Heart left ventricle (tissue), 16 donors: ENCODE measurements at regions of chr18 and their contacts with region 1.

Region 1: DNA sequence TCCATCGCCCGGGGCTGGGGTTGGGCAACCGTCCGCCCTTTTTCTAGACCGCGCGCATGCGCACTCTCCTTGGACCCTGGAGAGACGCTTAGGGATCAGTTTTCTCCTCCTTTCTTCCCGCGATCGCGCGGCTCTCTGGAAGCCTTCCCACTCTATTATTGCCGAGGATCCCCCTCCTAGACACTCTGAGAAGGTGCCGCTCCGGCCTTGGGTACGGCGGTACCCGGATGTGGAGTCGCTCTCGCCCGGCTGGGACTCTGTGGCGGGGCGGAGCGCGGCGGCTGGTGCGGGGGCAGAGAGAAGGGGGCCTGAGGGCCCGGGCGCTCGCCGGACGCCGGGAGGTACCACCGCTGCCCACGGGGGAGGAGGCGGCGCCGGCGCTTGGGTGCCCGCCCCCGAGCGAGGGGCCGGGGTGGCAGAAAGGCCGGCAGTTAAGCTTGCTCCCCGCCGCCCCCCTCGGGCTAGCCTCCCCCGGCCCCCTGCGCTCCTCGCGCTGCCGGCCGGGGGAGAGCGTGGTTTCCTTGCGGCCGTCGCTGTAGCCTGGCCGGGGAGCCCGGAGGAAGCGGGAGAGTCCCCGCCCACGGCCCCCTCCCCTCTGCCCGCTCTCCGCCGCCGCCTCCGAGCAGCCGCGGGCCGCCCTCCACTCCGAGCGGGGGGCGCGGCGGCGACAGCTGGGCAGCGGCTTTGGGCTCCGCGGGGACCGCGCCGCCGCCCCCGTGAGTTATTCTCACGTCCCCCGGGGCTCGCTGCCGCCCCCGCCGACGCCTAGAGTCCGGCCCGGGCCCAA is at the start of gene MIB1:
- DNase-seq: peak; percentile 67 to 100 (median 73)
- ATAC-seq: peak; percentile 76 to 88 (median 86)
- H3K4me3 ChIP-seq: peak within 1 kb of the TSS; percentile 71 to 96 (median 89)
- H3K27ac ChIP-seq: peak within 1 kb of the TSS; percentile 96 to 99 (median 98)
- H3K4me1 ChIP-seq: peaks cover 0 to 38% (median 18%) of the 10 kb centered on the region in 12 donors
- H3K27me3 ChIP-seq: no peaks in the 10 kb centered on the region
- CTCF ChIP-seq: no peak
- POLR2A ChIP-seq: peak in 1 of 2 donors; percentile 74
- total RNA-seq, gene MIB1: 15.3 to 33.4 (median 24.0) TPM

Region 2: GRCh38 chr18:21704603-21705364 is 36.1 kb before region 1 on chr18 and contains the start of gene ABHD3:
- intact Hi-C with region 1: loop called in 6 of 10 experiments (anchors 1 to 5 kb)
- DNase-seq: peak; percentile 94 to 97 (median 95)
- ATAC-seq: peak; percentile 99 to 100 (median 100)
- H3K4me3 ChIP-seq: peak within 1 kb of the TSS; percentile 46 to 99 (median 88)
- H3K27ac ChIP-seq: peak within 1 kb of the TSS; percentile 45 to 97 (median 92)
- H3K4me1 ChIP-seq: peaks cover 0 to 21% (median 7%) of the 10 kb centered on the region in 12 donors
- H3K27me3 ChIP-seq: no peaks in the 10 kb centered on the region
- CTCF ChIP-seq: peak in 11 of 12 donors; percentile 17 to 63 (median 48)
- POLR2A ChIP-seq: peak; percentile 70 to 97
- total RNA-seq, gene ABHD3: 2.1 to 15.6 (median 3.8) TPM

Region 3: GRCh38 chr18:21798126-21798525 is 57.2 kb after region 1 on chr18:
- intact Hi-C with region 1: loop called in 2 of 10 experiments (anchors 10 kb)
- DNase-seq: no peak
- ATAC-seq: no peak
- H3K4me3 ChIP-seq: no peak overlapping the region
- H3K27ac ChIP-seq: peak overlapping the region in 1 of 12 donors; percentile 8
- H3K4me1 ChIP-seq: peaks cover 0 to 21% (median 11%) of the 10 kb centered on the region in 12 donors
- H3K27me3 ChIP-seq: no peaks in the 10 kb centered on the region
- CTCF ChIP-seq: no peak
- POLR2A ChIP-seq: no peak

Region 4: GRCh38 chr18:21803495-21803894 is 62.6 kb after region 1 on chr18:
- intact Hi-C with region 1: loop called in 2 of 10 experiments (anchors 10 kb)
- DNase-seq: no peak
- ATAC-seq: no peak
- H3K4me3 ChIP-seq: no peak overlapping the region
- H3K27ac ChIP-seq: peak overlapping the region in 1 of 12 donors; percentile 28
- H3K4me1 ChIP-seq: peaks cover 0 to 19% (median 6%) of the 10 kb centered on the region in 12 donors
- H3K27me3 ChIP-seq: no peaks in the 10 kb centered on the region
- CTCF ChIP-seq: no peak
- POLR2A ChIP-seq: no peak